ENCODE measurements at regions of chr4 and their contacts with region 1.

Region 1: DNA sequence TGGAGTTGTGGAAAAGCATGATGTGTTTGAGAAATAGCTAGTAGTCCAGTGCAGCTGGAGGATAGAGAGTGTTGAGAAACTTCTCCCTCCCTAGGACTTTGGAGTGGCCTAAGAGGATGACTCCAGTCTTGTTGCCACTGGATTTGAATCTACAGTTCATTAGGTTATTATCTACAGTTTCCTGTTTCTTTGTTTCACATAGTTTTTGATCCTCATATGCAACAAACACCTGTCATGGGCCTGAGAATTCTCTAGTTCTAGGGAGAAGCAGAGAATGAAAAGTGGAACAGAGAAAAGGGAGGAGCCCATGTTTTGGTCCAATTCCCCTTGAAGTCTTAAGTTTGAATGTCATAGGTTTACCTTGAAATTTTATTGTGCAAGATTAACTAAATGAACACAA is 73.6 kb upstream of the TBC1D9 start:
- DNase-seq: peak; percentile 86
- H3K4me3 ChIP-seq: peak overlapping the region; percentile 42
- H3K27ac ChIP-seq: peak overlapping the region; percentile 88
- H3K4me1 ChIP-seq: peaks cover 68% of the 10 kb centered on the region
- CTCF ChIP-seq: no peak

Region 2: GRCh38 chr4:140720387-140721304 is 109.2 kb before region 1 on chr4:
- CTCF ChIA-PET with region 1: no interaction called
- POLR2A ChIA-PET with region 1: interaction called, 17 read pairs
- intact Hi-C with region 1: no loop called
- DNase-seq: peak; percentile 76
- H3K4me3 ChIP-seq: peak overlapping the region; percentile 65
- H3K27ac ChIP-seq: peak overlapping the region; percentile 70
- H3K4me1 ChIP-seq: peaks cover 57% of the 10 kb centered on the region
- CTCF ChIP-seq: no peak

Region 3: GRCh38 chr4:140800666-140801065 is 29.2 kb before region 1 on chr4:
- CTCF ChIA-PET with region 1: interaction called, 3 read pairs
- POLR2A ChIA-PET with region 1: interaction called, 12 read pairs
- intact Hi-C with region 1: no loop called
- DNase-seq: peak; percentile 62
- H3K4me3 ChIP-seq: no peak overlapping the region
- H3K27ac ChIP-seq: no peak overlapping the region
- H3K4me1 ChIP-seq: peaks cover 64% of the 10 kb centered on the region
- CTCF ChIP-seq: no peak

Region 4: DNA sequence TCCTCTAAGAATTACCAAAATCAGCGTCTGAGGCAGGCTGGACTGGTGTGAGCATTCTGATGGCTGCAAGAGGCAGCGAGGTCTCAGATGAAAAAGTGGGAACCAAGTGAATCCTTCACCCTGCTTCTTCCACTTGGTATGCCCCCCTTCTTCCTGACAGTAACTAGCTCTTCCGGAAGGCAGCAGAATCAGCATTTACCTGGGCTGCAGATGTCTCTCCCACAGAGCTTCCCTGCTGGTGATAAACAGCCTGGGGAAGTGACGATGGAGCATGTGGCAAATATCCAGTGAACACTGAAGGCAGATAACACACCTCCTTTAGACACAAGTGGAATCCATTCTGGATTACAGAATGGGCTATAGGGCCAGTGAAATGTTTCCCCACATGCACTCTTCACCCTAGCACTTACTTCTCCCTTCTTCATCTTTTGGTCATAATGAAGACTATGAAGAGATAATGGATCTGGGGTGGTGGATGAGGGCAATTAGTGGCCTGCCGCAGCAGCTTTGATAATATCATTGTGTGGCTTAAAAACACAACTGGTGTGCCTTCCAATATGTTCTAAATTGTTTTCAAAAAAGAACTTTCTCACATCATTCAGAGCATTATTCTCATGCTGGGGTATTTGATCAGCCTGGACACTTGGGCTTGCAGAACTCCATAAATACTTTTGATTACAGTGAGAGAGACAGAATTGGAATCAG is 12.9 kb before region 1 on chr4:
- CTCF ChIA-PET with region 1: interaction called, 4 read pairs
- POLR2A ChIA-PET with region 1: interaction called, 76 read pairs
- intact Hi-C with region 1: no loop called
- DNase-seq: no peak
- H3K4me3 ChIP-seq: no peak overlapping the region
- H3K27ac ChIP-seq: no peak overlapping the region
- H3K4me1 ChIP-seq: peaks cover 40% of the 10 kb centered on the region
- CTCF ChIP-seq: no peak

Region 5: GRCh38 chr4:141011901-141012315 is 182.1 kb after region 1 on chr4:
- CTCF ChIA-PET with region 1: no interaction called
- POLR2A ChIA-PET with region 1: no interaction called
- intact Hi-C with region 1: no loop called
- DNase-seq: no peak
- H3K4me3 ChIP-seq: no peak overlapping the region
- H3K27ac ChIP-seq: no peak overlapping the region
- H3K4me1 ChIP-seq: no peaks in the 10 kb centered on the region
- CTCF ChIP-seq: no peak

Measured in OCI-LY7 (cell line).